WTC11 (cell line): ENCODE measurements at regions of chr11 and their contacts with region 1.

Region 1: DNA sequence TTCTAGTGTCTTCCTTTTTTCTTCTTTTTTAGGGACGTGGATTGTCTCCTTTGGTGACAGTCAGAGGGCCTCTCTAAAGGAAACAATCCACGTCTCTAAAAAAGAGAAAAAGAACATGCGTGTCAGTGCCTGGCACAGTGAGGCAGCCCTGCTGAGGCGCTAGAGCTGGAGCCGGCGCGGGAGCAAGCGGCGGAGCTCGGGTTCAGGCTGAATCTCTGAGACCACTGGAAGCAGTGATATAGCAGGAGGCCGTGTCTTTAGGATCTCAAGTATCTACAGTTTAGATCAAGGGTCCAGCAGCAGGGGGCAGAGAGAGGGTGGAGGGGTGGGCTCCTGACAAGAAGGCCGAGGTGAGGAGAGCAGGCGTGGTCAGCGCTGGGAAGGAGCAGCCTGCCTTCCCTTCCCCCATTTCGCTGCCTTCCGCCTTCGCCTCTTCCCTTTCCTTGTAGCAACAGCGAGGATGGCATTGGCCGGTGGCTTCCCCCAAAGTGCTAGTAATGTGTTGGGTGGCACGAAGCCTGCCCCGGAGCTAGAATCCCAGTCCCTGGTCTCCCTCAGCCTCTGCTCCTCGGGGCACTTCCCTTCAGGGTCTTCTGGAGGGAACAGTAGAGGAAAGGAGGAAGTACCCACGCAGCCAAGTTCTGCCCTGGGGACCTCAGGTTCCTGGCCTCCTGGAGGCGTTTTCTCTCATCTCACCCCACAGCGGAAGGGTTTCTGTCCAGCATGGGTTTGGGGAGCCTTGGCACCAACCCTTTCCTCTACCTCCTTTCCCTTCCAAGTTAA is 28.2 kb upstream of the RAB1B start:
- DNase-seq: no peak
- ATAC-seq: peak; percentile 27
- H3K4me3 Mint-ChIP-seq: no peak overlapping the region
- H3K27ac Mint-ChIP-seq: peak overlapping the region; percentile 25; the same call in 1 of the 2 replicates
- H3K4me1 Mint-ChIP-seq: no peaks in the 10 kb centered on the region
- H3K27me3 Mint-ChIP-seq: no peaks in the 10 kb centered on the region
- CTCF ChIP-seq: no peak

Region 2: GRCh38 chr11:66035653-66036333 is 204.4 kb before region 1 on chr11:
- CTCF ChIA-PET with region 1: no interaction called
- POLR2A ChIA-PET with region 1: no interaction called
- DNase-seq: no peak
- ATAC-seq: no peak
- H3K4me3 Mint-ChIP-seq: no peak overlapping the region
- H3K27ac Mint-ChIP-seq: no peak overlapping the region
- H3K4me1 Mint-ChIP-seq: no peaks in the 10 kb centered on the region
- H3K27me3 Mint-ChIP-seq: peaks cover 22% of the 10 kb centered on the region
- CTCF ChIP-seq: no peak

Region 3: GRCh38 chr11:66207876-66208275 is 32.3 kb before region 1 on chr11:
- CTCF ChIA-PET with region 1: no interaction called
- POLR2A ChIA-PET with region 1: no interaction called
- DNase-seq: no peak
- ATAC-seq: no peak
- H3K4me3 Mint-ChIP-seq: no peak overlapping the region
- H3K27ac Mint-ChIP-seq: no peak overlapping the region
- H3K4me1 Mint-ChIP-seq: no peaks in the 10 kb centered on the region
- H3K27me3 Mint-ChIP-seq: no peaks in the 10 kb centered on the region
- CTCF ChIP-seq: no peak

Region 4: DNA sequence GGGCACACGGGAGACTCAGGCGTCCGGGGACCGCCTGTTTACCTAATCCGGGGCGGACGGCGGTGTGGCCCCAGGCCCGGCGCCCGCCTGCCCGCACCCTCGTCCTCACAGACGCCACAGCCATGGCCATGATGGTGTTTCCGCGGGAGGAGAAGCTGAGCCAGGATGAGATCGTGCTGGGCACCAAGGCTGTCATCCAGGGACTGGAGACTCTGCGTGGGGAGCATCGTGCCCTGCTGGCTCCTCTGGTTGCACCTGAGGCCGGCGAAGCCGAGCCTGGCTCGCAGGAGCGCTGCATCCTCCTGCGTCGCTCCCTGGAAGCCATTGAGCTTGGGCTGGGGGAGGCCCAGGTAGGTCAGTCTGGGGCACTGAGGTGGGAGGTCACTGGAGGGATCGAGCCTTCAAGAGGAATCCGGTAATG is 18.3 kb after region 1 on chr11:
- CTCF ChIA-PET with region 1: interaction called, 11 read pairs
- POLR2A ChIA-PET with region 1: interaction called, 5 read pairs
- DNase-seq: no peak
- ATAC-seq: no peak; the same call in 1 of the 2 replicates
- H3K4me3 Mint-ChIP-seq: peak overlapping the region; percentile 88
- H3K27ac Mint-ChIP-seq: no peak overlapping the region
- H3K4me1 Mint-ChIP-seq: peaks cover 15% of the 10 kb centered on the region
- H3K27me3 Mint-ChIP-seq: peaks cover 3% of the 10 kb centered on the region
- CTCF ChIP-seq: no peak

Region 5: GRCh38 chr11:66288671-66289547 is 48.7 kb after region 1 on chr11 and contains the start of gene YIF1A:
- CTCF ChIA-PET with region 1: no interaction called
- POLR2A ChIA-PET with region 1: no interaction called
- DNase-seq: peak; percentile 98
- ATAC-seq: peak; percentile 95
- H3K4me3 Mint-ChIP-seq: peak within 1 kb of the TSS; percentile 96
- H3K27ac Mint-ChIP-seq: peak within 1 kb of the TSS; percentile 96
- H3K4me1 Mint-ChIP-seq: peaks cover 20% of the 10 kb centered on the region
- H3K27me3 Mint-ChIP-seq: peaks cover 37% of the 10 kb centered on the region
- CTCF ChIP-seq: no peak
- total RNA-seq, gene YIF1A: 86.0 to 86.9 TPM (median 86.4 TPM) in 3 replicates

Region 6: DNA sequence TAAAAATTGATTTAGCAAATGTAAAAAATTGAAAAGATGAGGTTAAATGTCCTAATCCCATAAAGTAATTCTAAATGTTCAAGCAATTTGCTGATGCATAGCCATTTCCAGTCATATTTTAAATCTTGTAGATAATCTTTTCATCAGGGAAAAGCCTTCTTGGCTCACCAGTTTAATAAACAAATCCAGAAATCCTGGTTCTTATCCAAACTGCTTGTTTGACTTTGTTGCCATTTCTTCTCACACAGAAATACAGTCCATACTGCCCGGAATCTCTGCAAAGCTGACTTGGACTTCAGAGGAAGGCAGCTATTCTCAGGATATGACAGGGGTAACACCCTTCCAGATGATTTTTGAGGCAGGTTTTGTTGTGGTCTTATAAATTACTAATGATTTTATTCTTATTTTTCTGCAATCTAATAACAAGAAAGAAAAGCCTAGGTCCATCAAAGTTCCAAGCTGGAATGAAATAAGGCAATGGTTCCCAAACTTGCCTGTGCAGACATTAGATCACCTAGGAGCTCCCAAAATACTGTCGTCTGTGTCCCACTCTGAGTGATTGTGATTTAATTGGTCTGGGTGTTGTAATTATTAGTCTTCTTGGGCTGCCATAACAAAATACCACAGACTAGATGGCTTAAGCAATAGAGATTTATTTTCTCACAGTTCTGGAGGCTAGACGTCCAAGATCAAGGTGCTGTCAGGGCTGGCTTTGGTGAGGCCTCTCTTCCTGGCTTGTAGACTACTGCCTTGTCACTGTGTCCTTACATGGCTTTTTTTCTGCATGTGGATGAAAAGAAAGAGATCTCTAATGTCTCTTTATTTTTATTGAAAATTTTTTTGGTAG is 547.9 kb after region 1 on chr11:
- CTCF ChIA-PET with region 1: no interaction called
- POLR2A ChIA-PET with region 1: no interaction called
- DNase-seq: no peak
- ATAC-seq: no peak
- H3K4me3 Mint-ChIP-seq: no peak overlapping the region
- H3K27ac Mint-ChIP-seq: no peak overlapping the region
- H3K4me1 Mint-ChIP-seq: no peaks in the 10 kb centered on the region
- H3K27me3 Mint-ChIP-seq: no peaks in the 10 kb centered on the region
- CTCF ChIP-seq: no peak